Lower lobe of right lung (tissue), 2 donors: ENCODE measurements at regions of chr1 and their contacts with region 1.

Region 1: DNA sequence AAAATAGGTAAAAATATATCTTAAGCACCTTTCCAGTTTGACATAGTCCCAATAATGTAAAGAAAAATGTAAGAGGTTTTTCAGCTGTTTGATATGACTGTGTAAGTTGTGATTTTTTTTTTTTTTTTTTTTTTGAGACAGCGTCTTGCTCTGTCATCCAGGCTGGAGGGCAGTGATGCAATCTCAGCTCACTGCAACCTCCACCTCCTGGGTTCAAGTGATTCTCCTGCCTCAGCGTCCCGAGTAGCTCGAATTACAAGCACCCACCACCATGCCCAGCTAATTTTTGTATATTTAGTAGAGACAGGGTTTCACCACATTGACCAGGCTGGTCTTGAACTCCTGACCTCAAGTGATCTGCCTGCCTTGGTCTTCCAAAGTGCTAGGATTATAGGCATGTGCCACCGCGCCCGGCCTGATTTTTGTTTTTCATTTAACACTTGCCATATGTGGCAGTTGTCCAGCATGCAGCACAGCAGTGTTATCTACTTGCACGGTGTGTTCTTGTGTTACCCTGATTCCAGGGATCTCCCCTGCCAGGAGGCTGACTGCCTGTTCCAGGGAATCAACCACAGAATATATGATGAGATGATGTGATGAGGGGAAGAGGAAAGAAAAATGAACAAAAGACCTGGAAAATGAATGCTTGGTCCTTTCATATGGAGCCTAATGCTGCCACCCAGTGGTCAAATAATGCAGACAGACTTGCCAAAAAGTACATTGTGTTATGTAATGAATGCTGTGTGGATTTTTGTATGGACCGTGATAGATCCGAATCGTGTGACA is 79.0 kb downstream of the RAVER2 start:
- DNase-seq: no peak
- ATAC-seq: peak; percentile 85 to 88
- H3K4me3 ChIP-seq: no peak overlapping the region
- H3K27ac ChIP-seq: no peak overlapping the region
- H3K4me1 ChIP-seq: peaks cover 14% of the 10 kb centered on the region
- H3K27me3 ChIP-seq: no peaks in the 10 kb centered on the region
- CTCF ChIP-seq: peak; percentile 82

Region 2: GRCh38 chr1:64268653-64269557 is 555.0 kb before region 1 on chr1:
- intact Hi-C with region 1: loop called (anchors 10 kb)
- DNase-seq: no peak
- ATAC-seq: peak; percentile 92 to 94
- H3K4me3 ChIP-seq: no peak overlapping the region
- H3K27ac ChIP-seq: no peak overlapping the region
- H3K4me1 ChIP-seq: no peaks in the 10 kb centered on the region
- H3K27me3 ChIP-seq: no peaks in the 10 kb centered on the region
- CTCF ChIP-seq: peak; percentile 79

Region 3: GRCh38 chr1:65119951-65120350 is 296.1 kb after region 1 on chr1:
- intact Hi-C with region 1: no loop called
- DNase-seq: no peak
- ATAC-seq: no peak
- H3K4me3 ChIP-seq: no peak overlapping the region
- H3K27ac ChIP-seq: no peak overlapping the region
- H3K4me1 ChIP-seq: no peaks in the 10 kb centered on the region
- H3K27me3 ChIP-seq: no peaks in the 10 kb centered on the region
- CTCF ChIP-seq: no peak